ENCODE measurements at regions of chr17 and their contacts with region 1.

Region 1: GRCh38 chr17:43940630-43941029 is 1.6 kb downstream of the PPY start:
- DNase-seq: peak; percentile 81
- H3K4me3 ChIP-seq: no peak overlapping the region
- H3K27ac ChIP-seq: no peak overlapping the region
- H3K4me1 ChIP-seq: peaks cover 0 to 7% of the 10 kb centered on the region in 2 experiments; a peak in 1 of 4 replicates
- H3K27me3 ChIP-seq: no peaks in the 10 kb centered on the region
- CTCF ChIP-seq: peak; percentile 58
- EP300 ChIP-seq: no peak
- RAD21 ChIP-seq: peak; percentile 75

Region 2: GRCh38 chr17:43907425-43907981 is 33.1 kb before region 1 on chr17 and contains the start of gene MPP2:
- CTCF ChIA-PET with region 1: interaction called, 80 read pairs
- POLR2A ChIA-PET with region 1: no interaction called
- DNase-seq: peak; percentile 86
- H3K4me3 ChIP-seq: peak within 1 kb of the TSS; percentile 66 to 91
- H3K27ac ChIP-seq: peak within 1 kb of the TSS; percentile 24 to 91; a peak in 3 of 4 replicates
- H3K4me1 ChIP-seq: peaks cover 9 to 16% of the 10 kb centered on the region in 2 experiments; a peak in 2 of 4 replicates
- H3K27me3 ChIP-seq: peaks cover 7% of the 10 kb centered on the region; the same call in 1 of the 2 replicates
- CTCF ChIP-seq: peak; percentile 20; the same call in 1 of the 2 replicates
- EP300 ChIP-seq: no peak
- RAD21 ChIP-seq: no peak
- polyA plus RNA-seq, gene MPP2: 8.1 and 8.3 TPM in 2 replicates

Region 3: DNA sequence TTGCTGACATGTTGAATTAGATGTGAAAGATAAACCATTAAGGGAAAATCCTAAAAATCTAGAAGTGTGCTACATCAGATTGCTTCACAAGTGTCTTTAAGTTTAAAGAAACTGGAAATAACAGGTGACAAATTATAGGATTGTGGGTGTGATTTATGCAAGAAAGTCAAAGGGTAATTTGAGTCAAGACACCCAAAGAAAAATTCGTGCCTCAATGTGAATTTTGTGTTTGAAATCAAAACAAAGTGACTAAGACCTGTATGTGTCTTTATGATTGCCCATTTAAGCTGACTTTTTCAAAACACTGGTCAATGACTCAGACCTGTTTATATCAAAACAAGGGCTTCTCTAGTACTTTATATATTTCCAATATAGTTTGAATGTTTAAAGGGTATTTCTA is 18.3 kb after region 1 on chr17:
- CTCF ChIA-PET with region 1: interaction called, 23 read pairs
- POLR2A ChIA-PET with region 1: no interaction called
- DNase-seq: no peak
- H3K4me3 ChIP-seq: no peak overlapping the region
- H3K27ac ChIP-seq: no peak overlapping the region
- H3K4me1 ChIP-seq: no peaks in the 10 kb centered on the region
- H3K27me3 ChIP-seq: no peaks in the 10 kb centered on the region; the same call in 1 of the 2 replicates
- CTCF ChIP-seq: no peak
- EP300 ChIP-seq: no peak
- RAD21 ChIP-seq: no peak

Region 4: DNA sequence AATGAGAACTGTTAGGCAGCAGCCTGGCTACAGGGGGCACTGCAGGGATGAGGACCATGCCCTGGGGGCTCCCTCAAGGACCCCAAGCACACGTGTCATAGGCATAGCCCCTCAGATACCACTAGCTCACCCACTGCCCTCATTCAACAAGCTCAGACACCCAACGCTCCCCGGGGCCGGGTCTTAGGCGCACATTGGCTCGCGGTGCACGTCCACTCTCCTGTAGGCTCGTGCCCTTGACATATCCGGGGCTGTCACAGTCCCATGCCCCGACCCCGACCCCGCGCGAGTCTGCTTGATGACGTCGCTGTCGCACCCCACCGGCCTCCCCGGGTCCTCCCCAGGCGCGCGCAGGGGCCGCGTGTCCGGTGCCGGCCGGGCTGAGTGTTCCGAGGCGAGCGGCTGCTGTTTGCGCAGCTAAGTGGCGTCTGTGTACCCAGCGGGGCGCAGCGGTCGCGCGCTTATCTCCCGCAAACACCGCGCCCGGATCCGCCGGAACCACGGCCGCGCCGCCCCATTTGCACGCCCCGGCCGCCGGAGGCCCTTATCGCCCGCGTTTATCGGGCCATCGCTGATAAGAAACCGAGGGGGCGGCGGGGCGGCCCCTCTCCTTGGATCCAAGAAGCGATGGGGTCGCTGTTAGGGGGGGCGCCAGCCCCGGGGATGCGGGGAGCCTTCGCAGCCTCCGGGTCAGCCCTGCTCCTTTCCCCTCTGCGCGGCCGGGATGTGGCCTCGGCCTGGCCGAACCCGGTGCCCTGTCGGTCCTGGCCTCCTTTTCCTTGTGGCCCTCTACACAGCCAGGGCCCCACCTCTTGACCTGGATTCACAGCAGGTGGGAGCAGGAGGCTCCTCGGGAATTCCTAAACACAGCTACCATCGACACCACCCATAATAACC is 43.1 kb after region 1 on chr17:
- CTCF ChIA-PET with region 1: interaction called, 638 read pairs
- POLR2A ChIA-PET with region 1: no interaction called
- DNase-seq: peak; percentile 72
- H3K4me3 ChIP-seq: peak overlapping the region; percentile 41 to 54
- H3K27ac ChIP-seq: no peak overlapping the region
- H3K4me1 ChIP-seq: peaks cover 0 to 14% of the 10 kb centered on the region in 2 experiments; a peak in 1 of 4 replicates
- H3K27me3 ChIP-seq: peaks cover 14% of the 10 kb centered on the region; the same call in 1 of the 2 replicates
- CTCF ChIP-seq: peak; percentile 39; the same call in 1 of the 2 replicates
- EP300 ChIP-seq: no peak
- RAD21 ChIP-seq: no peak; the same call in 1 of the 2 replicates

Region 5: GRCh38 chr17:44030482-44030881 is 89.9 kb after region 1 on chr17:
- CTCF ChIA-PET with region 1: interaction called, 15 read pairs
- POLR2A ChIA-PET with region 1: no interaction called
- DNase-seq: no peak
- H3K4me3 ChIP-seq: no peak overlapping the region
- H3K27ac ChIP-seq: no peak overlapping the region
- H3K4me1 ChIP-seq: peaks cover 0 to 3% of the 10 kb centered on the region in 2 experiments; a peak in 1 of 4 replicates
- H3K27me3 ChIP-seq: no peaks in the 10 kb centered on the region
- CTCF ChIP-seq: no peak
- EP300 ChIP-seq: no peak
- RAD21 ChIP-seq: no peak

Region 6: GRCh38 chr17:44496815-44497214 is 556.2 kb after region 1 on chr17:
- CTCF ChIA-PET with region 1: no interaction called
- POLR2A ChIA-PET with region 1: no interaction called
- DNase-seq: no peak
- H3K4me3 ChIP-seq: no peak overlapping the region
- H3K27ac ChIP-seq: peak overlapping the region in 1 of 2 experiments; percentile 17; a peak in 1 of 4 replicates
- H3K4me1 ChIP-seq: peaks cover 5 to 6% of the 10 kb centered on the region in 2 experiments; a peak in 3 of 4 replicates
- H3K27me3 ChIP-seq: no peaks in the 10 kb centered on the region
- CTCF ChIP-seq: no peak
- EP300 ChIP-seq: no peak
- RAD21 ChIP-seq: no peak

Measured in SK-N-SH (cell line).